ENCODE measurements at regions of chr11 and their contacts with region 1.

Region 1: GRCh38 chr11:64304316-64305072 is 830 bp upstream of the ESRRA start:
- DNase-seq: peak; percentile 23
- H3K4me3 ChIP-seq: peak overlapping the region; percentile 66
- H3K27me3 ChIP-seq: peaks cover 8% of the 10 kb centered on the region; the same call in 1 of the 2 replicates
- CTCF ChIP-seq: peak; percentile 89

Region 2: GRCh38 chr11:64204464-64204989 is 100.0 kb before region 1 on chr11:
- CTCF ChIA-PET with region 1: interaction called, 229 read pairs
- POLR2A ChIA-PET with region 1: no interaction called
- DNase-seq: peak; percentile 73
- H3K4me3 ChIP-seq: no peak overlapping the region
- H3K27me3 ChIP-seq: no peaks in the 10 kb centered on the region
- CTCF ChIP-seq: peak; percentile 82

Region 3: GRCh38 chr11:64252003-64252872 is 52.3 kb before region 1 on chr11:
- CTCF ChIA-PET with region 1: interaction called, 92 read pairs
- POLR2A ChIA-PET with region 1: no interaction called
- DNase-seq: no peak
- H3K4me3 ChIP-seq: peak overlapping the region; percentile 79
- H3K27me3 ChIP-seq: no peaks in the 10 kb centered on the region
- CTCF ChIP-seq: peak; percentile 56

Region 4: GRCh38 chr11:64276653-64277431 is 27.7 kb before region 1 on chr11:
- CTCF ChIA-PET with region 1: interaction called, 41 read pairs
- POLR2A ChIA-PET with region 1: no interaction called
- DNase-seq: no peak
- H3K4me3 ChIP-seq: no peak overlapping the region
- H3K27me3 ChIP-seq: no peaks in the 10 kb centered on the region
- CTCF ChIP-seq: no peak

Region 5: DNA sequence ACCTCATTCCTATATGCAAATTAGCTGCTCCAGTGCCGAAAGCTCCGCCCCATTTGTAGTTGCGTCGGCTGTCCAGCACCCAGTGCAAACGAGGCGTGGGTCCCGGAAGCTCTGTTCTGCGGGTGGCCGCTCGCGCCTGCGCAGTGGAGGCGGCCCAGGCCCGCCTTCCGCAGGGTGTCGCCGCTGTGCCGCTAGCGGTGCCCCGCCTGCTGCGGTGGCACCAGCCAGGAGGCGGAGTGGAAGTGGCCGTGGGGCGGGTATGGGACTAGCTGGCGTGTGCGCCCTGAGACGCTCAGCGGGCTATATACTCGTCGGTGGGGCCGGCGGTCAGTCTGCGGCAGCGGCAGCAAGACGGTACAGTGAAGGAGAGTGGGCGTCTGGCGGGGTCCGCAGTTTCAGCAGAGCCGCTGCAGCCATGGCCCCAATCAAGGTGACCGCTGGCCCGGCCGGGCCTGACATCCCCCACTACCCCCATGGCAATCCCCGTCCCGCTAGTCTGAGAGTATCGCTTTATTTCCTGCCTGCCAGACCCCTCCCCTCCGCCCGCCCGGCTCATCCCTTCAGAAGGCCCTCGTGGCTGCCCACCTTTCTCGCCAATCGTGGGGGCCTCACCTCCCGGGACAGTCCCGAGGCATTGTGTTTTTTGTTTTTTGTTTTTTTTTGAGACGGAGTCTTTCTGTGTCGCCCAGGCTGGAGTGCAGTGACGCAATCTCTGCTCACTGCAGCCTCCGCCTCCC is 13.6 kb after region 1 on chr11 and contains the start of gene PRDX5:
- CTCF ChIA-PET with region 1: interaction called, 41 read pairs
- POLR2A ChIA-PET with region 1: interaction called, 5 read pairs
- DNase-seq: peak; percentile 79
- H3K4me3 ChIP-seq: peak within 1 kb of the TSS; percentile 98
- H3K27me3 ChIP-seq: no peaks in the 10 kb centered on the region
- CTCF ChIP-seq: peak; percentile 27; the same call in 1 of the 2 replicates
- polyA plus RNA-seq, gene PRDX5: 398 and 468 TPM in 2 replicates

Region 6: GRCh38 chr11:64396079-64396591 is 91.6 kb after region 1 on chr11:
- CTCF ChIA-PET with region 1: no interaction called
- POLR2A ChIA-PET with region 1: no interaction called
- DNase-seq: no peak
- H3K4me3 ChIP-seq: no peak overlapping the region
- H3K27me3 ChIP-seq: peaks cover 2% of the 10 kb centered on the region; the same call in 1 of the 2 replicates
- CTCF ChIP-seq: no peak